Mammary epithelial cell (primary cell): ENCODE measurements at regions of chr1 and their contacts with region 1.

Region 1: DNA sequence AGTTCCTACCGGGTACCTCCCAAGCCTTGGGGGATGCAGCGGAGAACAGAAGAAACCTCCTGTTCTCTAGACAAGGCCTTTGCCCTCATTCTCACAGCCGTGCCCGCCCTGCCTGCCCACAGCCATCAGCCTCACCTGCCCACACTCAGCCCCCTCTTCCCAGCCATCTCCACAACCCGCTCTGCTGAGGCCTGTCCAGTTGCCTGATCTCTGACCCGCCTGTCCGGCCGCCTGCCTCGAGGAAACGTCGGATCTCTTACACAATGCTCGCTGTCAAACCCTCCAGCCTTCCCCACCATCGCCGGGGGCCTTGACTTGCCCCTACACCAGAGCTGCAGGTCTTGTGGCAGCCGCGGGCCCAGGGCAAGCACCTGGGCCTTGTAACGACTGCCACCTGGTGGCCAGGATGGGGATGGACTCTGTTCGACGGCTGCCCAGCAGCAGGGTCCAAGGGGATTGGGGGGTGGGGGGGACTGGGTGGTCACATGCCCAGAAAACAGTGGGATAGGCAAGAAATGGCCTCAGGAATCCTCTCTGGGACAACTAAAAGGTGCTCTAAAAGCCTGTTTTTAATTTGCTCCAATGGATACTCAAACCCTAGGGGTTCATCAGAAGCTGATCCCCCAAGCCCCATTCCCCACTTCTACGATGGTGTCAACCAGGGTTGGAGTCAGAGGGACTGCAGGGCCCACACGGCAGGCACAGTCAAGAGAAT is 31.0 kb downstream of the SLC45A1 start:
- DNase-seq: peak; percentile 24
- H3K4me3 ChIP-seq: no peak overlapping the region
- H3K27ac ChIP-seq: no peak overlapping the region
- H3K4me1 ChIP-seq: peaks cover 14% of the 10 kb centered on the region
- H3K27me3 ChIP-seq: no peaks in the 10 kb centered on the region
- CTCF ChIP-seq: peak; percentile 53 to 88

Region 2: DNA sequence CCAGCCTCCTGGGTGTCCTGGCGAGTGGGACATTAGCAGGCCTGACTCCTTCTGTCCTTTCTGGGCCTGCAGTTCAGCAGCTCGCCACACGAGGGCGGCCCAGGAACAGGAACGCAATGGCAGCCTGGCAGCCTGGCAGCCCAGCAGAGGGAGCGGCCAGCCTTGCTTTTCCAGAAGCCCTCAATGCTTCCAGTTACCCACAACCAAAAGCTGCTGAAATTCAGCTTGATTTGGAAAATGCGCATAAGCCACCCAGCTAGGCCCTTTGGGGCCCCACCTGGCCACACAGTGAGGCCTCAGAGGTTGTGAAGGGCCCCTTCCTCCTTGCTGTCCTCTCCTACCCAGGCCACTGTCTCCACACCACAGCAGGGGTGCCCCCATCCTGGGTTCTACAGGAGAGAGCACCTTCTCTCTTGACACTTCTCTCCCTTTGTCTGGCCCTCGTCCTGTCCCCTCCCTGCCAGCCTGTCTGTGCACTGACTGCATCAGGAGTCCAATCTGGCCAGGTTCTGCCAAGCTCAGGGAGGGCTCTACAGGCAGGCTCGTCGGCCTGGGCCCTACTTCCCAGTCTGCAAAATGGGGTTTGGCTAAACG is 681.2 kb before region 1 on chr1:
- CTCF ChIA-PET with region 1: no interaction called
- dilution Hi-C with region 1: no loop called
- in situ Hi-C with region 1: no loop called
- intact Hi-C with region 1: loop called (anchors 1 kb)
- DNase-seq: peak; percentile 62
- H3K4me3 ChIP-seq: no peak overlapping the region
- H3K27ac ChIP-seq: no peak overlapping the region
- H3K4me1 ChIP-seq: peaks cover 4% of the 10 kb centered on the region
- H3K27me3 ChIP-seq: no peaks in the 10 kb centered on the region
- CTCF ChIP-seq: peak; percentile 99 to 100

Region 3: GRCh38 chr1:7975212-7975865 is 373.6 kb before region 1 on chr1:
- CTCF ChIA-PET with region 1: no interaction called
- dilution Hi-C with region 1: no loop called
- in situ Hi-C with region 1: no loop called
- intact Hi-C with region 1: loop called (anchors 1 kb)
- DNase-seq: peak; percentile 75
- H3K4me3 ChIP-seq: no peak overlapping the region
- H3K27ac ChIP-seq: no peak overlapping the region
- H3K4me1 ChIP-seq: no peaks in the 10 kb centered on the region
- H3K27me3 ChIP-seq: no peaks in the 10 kb centered on the region
- CTCF ChIP-seq: peak; percentile 96 to 98

Region 4: DNA sequence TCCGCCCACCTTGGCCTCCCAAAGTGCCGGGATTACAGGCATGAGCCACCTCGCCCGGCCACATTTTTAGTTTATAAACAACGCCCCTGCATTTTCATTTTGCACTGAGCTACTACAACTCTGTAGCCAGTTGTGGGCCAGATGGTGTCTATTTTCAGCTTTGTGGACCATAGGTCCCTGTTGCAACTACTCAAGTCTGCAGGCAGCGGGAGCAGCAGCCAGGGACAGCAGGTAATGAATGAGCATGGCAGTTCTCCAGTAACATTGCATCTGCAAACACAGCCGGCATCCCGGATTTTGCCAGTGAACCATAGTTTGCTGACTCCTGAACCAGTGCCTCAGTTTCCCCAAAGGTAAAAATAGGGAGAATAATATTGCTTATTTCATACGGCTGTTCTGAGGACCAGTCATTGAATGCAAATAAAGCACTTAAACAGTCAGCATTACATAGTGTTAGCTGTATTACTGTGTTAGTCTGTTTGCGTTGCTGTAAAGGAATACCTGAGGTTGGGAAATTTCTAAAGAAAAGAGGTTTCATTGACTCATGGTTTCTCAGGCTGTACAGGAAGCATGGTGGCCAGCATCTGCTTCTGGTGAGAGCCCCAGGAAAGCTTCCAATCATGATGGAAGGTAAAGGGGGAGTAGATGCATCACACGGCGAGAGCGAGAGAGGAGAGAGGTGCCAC is 96.5 kb before region 1 on chr1:
- CTCF ChIA-PET with region 1: no interaction called
- dilution Hi-C with region 1: loop called (anchors 5 kb)
- in situ Hi-C with region 1: no loop called
- intact Hi-C with region 1: no loop called
- DNase-seq: no peak
- H3K4me3 ChIP-seq: no peak overlapping the region
- H3K27ac ChIP-seq: no peak overlapping the region
- H3K4me1 ChIP-seq: peaks cover 3% of the 10 kb centered on the region
- H3K27me3 ChIP-seq: no peaks in the 10 kb centered on the region
- CTCF ChIP-seq: no peak

Region 5: GRCh38 chr1:8314346-8315280 is 34.3 kb before region 1 on chr1:
- CTCF ChIA-PET with region 1: interaction called, 3 read pairs
- dilution Hi-C with region 1: no loop called
- in situ Hi-C with region 1: no loop called
- intact Hi-C with region 1: loop called (anchors 2 kb)
- DNase-seq: peak; percentile 62
- H3K4me3 ChIP-seq: no peak overlapping the region
- H3K27ac ChIP-seq: no peak overlapping the region
- H3K4me1 ChIP-seq: peaks cover 19% of the 10 kb centered on the region
- H3K27me3 ChIP-seq: no peaks in the 10 kb centered on the region
- CTCF ChIP-seq: peak; percentile 95 to 97

Region 6: DNA sequence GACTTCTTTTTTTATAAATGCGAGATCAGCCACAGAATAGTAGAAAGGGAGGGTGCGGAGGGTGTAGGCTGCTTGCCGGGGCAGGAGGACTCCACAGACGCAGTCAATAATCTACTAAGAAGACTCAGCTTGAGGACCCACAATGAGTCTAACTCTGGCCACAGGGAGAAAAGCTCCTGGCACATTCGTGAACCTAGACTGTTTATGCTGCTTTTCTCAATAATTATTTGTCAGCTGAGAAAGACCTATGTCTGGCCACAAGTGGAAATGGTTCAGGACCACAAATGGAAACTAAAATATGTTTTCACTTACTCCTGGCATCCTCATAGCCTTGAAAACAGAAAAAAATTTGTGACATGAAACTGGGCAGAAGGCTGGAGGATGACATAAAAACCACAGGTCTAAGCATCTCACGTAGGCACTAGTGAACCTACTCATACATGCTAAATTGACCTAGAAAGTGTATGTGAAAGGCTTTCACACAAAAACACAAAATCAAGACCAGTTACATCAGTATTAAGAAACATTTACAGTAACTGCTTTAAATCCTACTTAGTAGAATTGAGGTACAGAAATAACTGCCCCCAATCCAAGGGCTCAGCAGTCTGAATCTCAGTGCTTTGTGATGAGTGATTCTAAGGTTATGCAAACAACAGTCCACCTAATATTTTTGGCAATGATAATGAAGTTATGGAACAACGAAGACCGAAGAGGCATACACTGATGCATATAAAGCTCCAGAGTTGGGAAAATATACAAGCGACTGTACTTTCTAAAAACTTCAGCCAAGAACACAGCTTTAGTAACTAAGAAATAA is 128.4 kb after region 1 on chr1:
- CTCF ChIA-PET with region 1: no interaction called
- dilution Hi-C with region 1: no loop called
- in situ Hi-C with region 1: no loop called
- intact Hi-C with region 1: no loop called
- DNase-seq: no peak
- H3K4me3 ChIP-seq: no peak overlapping the region
- H3K27ac ChIP-seq: no peak overlapping the region
- H3K4me1 ChIP-seq: no peaks in the 10 kb centered on the region
- H3K27me3 ChIP-seq: no peaks in the 10 kb centered on the region
- CTCF ChIP-seq: no peak

Region 7: DNA sequence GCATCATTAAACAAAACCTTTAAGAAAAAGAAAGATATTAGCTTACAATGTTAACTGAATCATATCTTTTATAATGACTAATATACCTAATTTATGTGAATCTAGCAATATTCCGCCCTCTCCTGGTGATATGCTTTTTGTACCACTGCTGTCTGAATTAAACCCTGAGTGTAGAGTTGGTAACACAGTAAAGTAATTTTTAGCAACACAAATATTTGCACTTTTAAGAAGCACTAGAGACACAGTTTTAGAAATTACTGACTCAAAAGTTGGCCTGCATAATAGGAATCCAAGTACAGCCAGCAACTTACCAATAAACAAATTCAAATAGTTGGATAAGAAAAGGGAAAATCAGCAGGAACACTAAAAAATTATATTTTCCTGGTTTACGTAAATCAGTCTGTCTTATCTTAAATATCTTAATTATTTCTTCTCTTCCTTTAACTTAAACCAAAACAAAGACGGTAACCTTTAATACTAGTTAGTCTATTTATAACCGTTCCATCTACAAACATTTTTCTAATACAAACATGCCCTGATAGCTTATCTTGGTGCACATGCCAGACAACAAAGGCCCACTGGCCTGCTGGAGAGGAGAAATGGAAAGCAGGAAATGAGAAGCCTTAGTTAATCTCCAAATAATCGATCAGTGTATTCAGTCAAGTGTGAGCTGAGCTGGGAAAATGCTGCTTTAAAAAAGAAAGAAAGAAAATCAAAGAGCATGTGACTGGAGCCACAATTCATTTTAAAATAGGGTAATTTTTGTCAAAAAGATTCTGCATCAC is 222.5 kb after region 1 on chr1:
- CTCF ChIA-PET with region 1: interaction called, 15 read pairs
- dilution Hi-C with region 1: no loop called
- in situ Hi-C with region 1: no loop called
- intact Hi-C with region 1: no loop called
- DNase-seq: peak; percentile 24
- H3K4me3 ChIP-seq: no peak overlapping the region
- H3K27ac ChIP-seq: no peak overlapping the region
- H3K4me1 ChIP-seq: no peaks in the 10 kb centered on the region
- H3K27me3 ChIP-seq: no peaks in the 10 kb centered on the region
- CTCF ChIP-seq: peak; percentile 37 to 38

Region 8: GRCh38 chr1:8727809-8728213 is 378.9 kb after region 1 on chr1:
- CTCF ChIA-PET with region 1: no interaction called
- dilution Hi-C with region 1: no loop called
- in situ Hi-C with region 1: no loop called
- intact Hi-C with region 1: no loop called
- DNase-seq: no peak
- H3K4me3 ChIP-seq: no peak overlapping the region
- H3K27ac ChIP-seq: no peak overlapping the region
- H3K4me1 ChIP-seq: peaks cover 5% of the 10 kb centered on the region
- H3K27me3 ChIP-seq: no peaks in the 10 kb centered on the region
- CTCF ChIP-seq: no peak